Activated naive CD4-positive, alpha-beta T cell treated with anti-CD3 and anti-CD28 coated beads for 36 hours (primary cell): ENCODE measurements at regions of chr10 and their contacts with region 1.

Region 1: DNA sequence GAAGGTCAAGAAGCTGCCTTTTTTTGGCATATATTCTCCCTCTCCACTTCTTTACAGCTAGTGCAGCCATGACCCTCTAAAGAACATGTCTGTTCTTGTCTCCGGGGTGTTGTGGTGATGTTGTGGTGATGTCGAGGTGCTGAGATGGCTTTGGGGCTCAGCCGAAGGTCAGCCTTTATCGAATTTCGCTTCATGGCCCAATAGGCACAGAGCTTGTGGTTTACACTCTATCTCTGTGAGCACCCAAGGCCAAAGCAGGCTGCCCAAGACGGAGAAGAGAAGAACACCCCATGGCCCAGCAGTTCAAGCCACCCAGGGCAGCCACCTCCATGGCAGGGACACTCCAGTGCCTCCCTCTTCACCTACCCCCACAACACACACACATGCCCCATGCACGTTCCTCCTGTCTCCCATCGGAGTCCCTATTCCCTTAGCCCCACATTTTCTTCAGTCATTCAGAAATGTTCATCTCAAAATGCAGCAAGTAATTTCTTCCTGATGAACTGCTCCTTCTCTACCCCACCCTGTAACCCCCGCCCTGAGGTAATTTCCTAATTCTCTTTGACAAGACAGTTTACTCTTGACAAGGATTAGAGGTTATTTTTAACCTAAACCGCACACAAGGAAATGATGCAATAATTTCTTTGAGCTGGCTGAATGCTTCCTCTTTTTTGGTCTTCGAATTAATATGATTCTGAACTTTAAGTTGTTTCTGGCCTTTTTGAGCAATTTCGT is 18.6 kb upstream of the ADRB1 start:
- DNase-seq: peak; percentile 54
- H3K4me3 Mint-ChIP-seq: peak overlapping the region; percentile 28
- H3K27ac Mint-ChIP-seq: peak overlapping the region; percentile 64
- H3K4me1 Mint-ChIP-seq: peaks cover 30% of the 10 kb centered on the region
- H3K27me3 Mint-ChIP-seq: peaks cover 32% of the 10 kb centered on the region

Region 2: DNA sequence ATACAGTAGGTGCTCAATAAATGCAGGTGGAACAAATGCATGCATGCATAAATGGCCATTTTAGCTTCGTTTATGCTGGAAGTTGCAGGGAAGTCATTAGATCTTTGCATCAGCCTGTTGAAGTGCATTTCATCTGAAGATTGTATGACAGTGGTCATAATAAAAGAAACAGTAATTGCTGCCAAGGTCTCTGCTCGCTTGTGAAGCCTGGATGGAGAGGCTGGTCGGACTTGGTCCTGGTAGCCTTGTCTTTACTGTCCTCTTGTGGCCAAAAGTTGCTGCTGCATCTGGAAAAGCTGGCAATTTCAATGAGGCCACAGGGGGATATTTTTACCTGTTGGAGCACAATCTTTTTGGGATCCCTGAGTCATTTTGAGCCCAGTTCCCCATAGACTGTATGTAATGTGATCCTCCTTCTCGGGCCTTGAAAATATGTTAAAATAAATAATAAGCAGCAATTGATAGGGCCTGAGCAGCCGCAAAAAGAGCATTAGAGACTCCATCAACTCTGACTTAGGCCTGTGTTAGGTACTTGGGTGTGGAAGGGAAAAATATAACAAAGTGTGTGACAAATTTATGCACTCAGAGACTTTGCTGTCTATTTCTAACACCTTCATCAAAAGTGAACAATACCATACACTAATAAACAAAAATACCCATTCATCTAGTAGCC is 503.8 kb before region 1 on chr10:
- CTCF ChIA-PET with region 1: no interaction called
- intact Hi-C with region 1: no loop called
- DNase-seq: peak; percentile 58
- H3K4me3 Mint-ChIP-seq: no peak overlapping the region
- H3K27ac Mint-ChIP-seq: no peak overlapping the region
- H3K4me1 Mint-ChIP-seq: no peaks in the 10 kb centered on the region
- H3K27me3 Mint-ChIP-seq: peaks cover 8% of the 10 kb centered on the region

Region 3: GRCh38 chr10:113960617-113961181 is 64.3 kb before region 1 on chr10:
- CTCF ChIA-PET with region 1: no interaction called
- intact Hi-C with region 1: loop called (anchors 1 kb)
- DNase-seq: peak; percentile 39
- H3K4me3 Mint-ChIP-seq: no peak overlapping the region
- H3K27ac Mint-ChIP-seq: no peak overlapping the region
- H3K4me1 Mint-ChIP-seq: peaks cover 37% of the 10 kb centered on the region
- H3K27me3 Mint-ChIP-seq: peaks cover 7% of the 10 kb centered on the region

Region 4: GRCh38 chr10:114002422-114002821 is 22.6 kb before region 1 on chr10:
- CTCF ChIA-PET with region 1: no interaction called
- intact Hi-C with region 1: no loop called
- DNase-seq: no peak
- H3K4me3 Mint-ChIP-seq: no peak overlapping the region
- H3K27ac Mint-ChIP-seq: no peak overlapping the region
- H3K4me1 Mint-ChIP-seq: peaks cover 2% of the 10 kb centered on the region
- H3K27me3 Mint-ChIP-seq: peaks cover 3% of the 10 kb centered on the region

Region 5: GRCh38 chr10:114043532-114044246 is 18.6 kb after region 1 on chr10 and contains the start of gene ADRB1:
- CTCF ChIA-PET with region 1: no interaction called
- intact Hi-C with region 1: loop called (anchors 1 kb)
- DNase-seq: peak; percentile 53
- H3K4me3 Mint-ChIP-seq: peak within 1 kb of the TSS; percentile 72
- H3K27ac Mint-ChIP-seq: no peak within 1 kb of the TSS
- H3K4me1 Mint-ChIP-seq: peaks cover 11% of the 10 kb centered on the region
- H3K27me3 Mint-ChIP-seq: peaks cover 62% of the 10 kb centered on the region
- total RNA-seq, gene ADRB1: not detected